Psoas muscle (tissue), 8 donors: ENCODE measurements at regions of chr12 and their contacts with region 1.

Region 1: GRCh38 chr12:26434299-26435068 is 239.1 kb downstream of the SSPN start:
- DNase-seq: no peak
- ATAC-seq: peak; percentile 71 to 88 (median 82)
- H3K4me3 ChIP-seq: no peak overlapping the region
- H3K27ac ChIP-seq: no peak overlapping the region
- H3K4me1 ChIP-seq: no peaks in the 10 kb centered on the region
- H3K27me3 ChIP-seq: no peaks in the 10 kb centered on the region
- CTCF ChIP-seq: peak; percentile 72

Region 2: DNA sequence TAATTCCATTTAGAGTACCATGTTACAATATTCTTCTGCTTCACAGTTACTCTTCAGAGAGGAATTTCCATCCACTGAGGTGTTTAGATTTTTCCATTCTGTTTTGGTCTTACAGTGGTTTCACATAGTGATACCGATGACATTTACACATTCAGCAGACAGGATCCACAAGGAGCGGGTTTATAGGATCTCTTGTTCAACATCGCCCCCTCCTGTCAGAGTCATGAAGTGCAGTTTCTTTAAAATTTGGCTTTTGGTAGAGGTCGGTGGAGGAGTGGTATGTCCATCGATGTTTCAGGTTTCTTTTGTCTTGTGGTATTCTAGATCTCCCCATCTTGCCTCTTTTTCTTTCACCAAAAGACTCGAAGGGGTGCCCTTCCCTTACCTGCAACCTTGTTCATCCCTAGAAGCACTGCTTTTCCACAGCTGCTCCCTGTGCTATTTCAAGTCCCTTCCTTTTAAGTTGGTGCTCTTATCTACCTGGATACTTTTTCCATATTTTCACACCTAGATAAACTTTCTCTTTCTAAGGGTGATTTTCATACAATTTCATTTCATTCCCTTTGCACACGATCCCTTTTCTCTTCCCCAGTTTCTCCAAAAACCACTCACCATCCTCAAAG is 217.2 kb after region 1 on chr12:
- intact Hi-C with region 1: loop called (anchors 2 to 5 kb)
- DNase-seq: no peak
- ATAC-seq: peak; percentile 67 to 85 (median 76)
- H3K4me3 ChIP-seq: no peak overlapping the region
- H3K27ac ChIP-seq: no peak overlapping the region
- H3K4me1 ChIP-seq: no peaks in the 10 kb centered on the region
- H3K27me3 ChIP-seq: no peaks in the 10 kb centered on the region
- CTCF ChIP-seq: peak; percentile 83